ENCODE measurements at regions of chr16 and their contacts with region 1.

Region 1: DNA sequence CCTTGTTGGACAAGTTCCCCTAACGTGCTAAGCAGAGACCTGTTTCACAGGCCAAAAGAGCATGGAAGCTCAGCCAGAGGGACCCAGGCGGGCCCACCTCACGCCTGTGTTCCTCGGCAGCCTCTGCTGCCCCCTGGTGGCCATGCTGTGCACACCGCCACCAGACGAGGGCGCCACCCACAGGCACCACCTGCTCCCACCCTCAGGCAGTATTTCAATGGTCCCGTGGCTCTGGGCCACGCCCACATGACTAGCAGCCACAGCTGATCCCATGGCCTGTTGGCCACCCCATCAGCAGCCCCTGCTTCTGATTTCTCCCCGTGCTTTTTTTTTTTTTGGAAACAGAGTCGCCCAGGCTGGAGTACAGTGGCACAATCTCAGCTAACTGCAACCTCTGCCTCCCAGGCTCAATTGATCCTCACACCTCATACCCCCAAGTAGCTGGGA is 18.9 kb downstream of the MPG start:
- DNase-seq: peak; percentile 97
- H3K4me3 Mint-ChIP-seq: no peak overlapping the region
- H3K27ac Mint-ChIP-seq: no peak overlapping the region
- H3K4me1 Mint-ChIP-seq: peaks cover 5% of the 10 kb centered on the region
- H3K27me3 Mint-ChIP-seq: no peaks in the 10 kb centered on the region

Region 2: GRCh38 chr16:65671-66137 is 31.3 kb before region 1 on chr16:
- intact Hi-C with region 1: loop called (anchors 1 kb)
- DNase-seq: peak; percentile 96
- H3K4me3 Mint-ChIP-seq: no peak overlapping the region
- H3K27ac Mint-ChIP-seq: no peak overlapping the region
- H3K4me1 Mint-ChIP-seq: peaks cover 5% of the 10 kb centered on the region
- H3K27me3 Mint-ChIP-seq: peaks cover 12% of the 10 kb centered on the region

Region 3: GRCh38 chr16:164827-165538 is 68.0 kb after region 1 on chr16:
- intact Hi-C with region 1: no loop called
- DNase-seq: no peak
- H3K4me3 Mint-ChIP-seq: peak overlapping the region; percentile 26
- H3K27ac Mint-ChIP-seq: no peak overlapping the region
- H3K4me1 Mint-ChIP-seq: no peaks in the 10 kb centered on the region
- H3K27me3 Mint-ChIP-seq: peaks cover 44% of the 10 kb centered on the region

Region 4: DNA sequence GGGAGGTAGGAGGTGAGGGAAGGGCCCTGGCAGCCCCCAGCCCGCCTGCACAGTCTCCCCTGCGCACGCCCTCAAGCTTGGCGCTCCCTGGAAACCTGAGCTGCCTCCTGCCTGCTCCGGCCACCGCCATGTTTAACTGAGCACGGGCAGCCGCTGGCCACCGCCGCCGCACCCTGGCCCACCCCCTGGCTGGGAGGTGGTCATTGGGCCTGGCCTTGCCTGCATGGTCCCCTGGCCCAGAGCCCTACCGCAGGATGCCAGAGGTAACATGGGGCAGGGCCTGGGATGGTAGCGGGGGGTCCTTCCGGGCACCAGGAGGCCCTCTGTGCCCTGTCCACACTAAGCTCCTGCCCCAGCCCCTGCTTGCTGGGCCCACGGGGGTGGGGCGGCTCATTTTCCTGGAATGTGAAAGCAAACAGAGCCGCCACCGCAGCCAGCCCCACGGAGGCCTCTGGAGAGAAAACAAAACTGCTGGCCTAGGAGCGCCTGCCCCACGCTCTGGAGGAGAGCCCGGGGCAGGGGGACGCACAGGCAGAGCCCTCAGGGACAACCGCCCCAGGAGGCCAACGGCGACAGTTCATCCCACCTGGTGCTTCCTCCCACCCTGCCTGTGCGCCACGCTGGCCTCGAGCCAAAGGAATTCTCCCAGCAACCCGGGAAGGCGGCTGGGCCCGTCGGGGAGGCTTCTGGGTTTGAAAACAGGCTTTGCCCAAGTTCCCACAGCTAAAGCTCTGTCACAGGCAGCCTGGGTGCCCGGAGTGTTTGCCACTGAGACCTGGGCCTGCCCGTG is 1938.7 kb after region 1 on chr16:
- intact Hi-C with region 1: no loop called
- DNase-seq: no peak
- H3K4me3 Mint-ChIP-seq: no peak overlapping the region
- H3K27ac Mint-ChIP-seq: no peak overlapping the region
- H3K4me1 Mint-ChIP-seq: no peaks in the 10 kb centered on the region
- H3K27me3 Mint-ChIP-seq: no peaks in the 10 kb centered on the region